Tibial artery (tissue), 4 donors: ENCODE measurements at regions of chr11 and their contacts with region 1.

Region 1: GRCh38 chr11:9787981-9788521 is 124.2 kb downstream of the SWAP70 start:
- DNase-seq: peak in 1 of 2 donors; percentile 36
- H3K4me3 ChIP-seq: no peak overlapping the region
- H3K27ac ChIP-seq: no peak overlapping the region
- H3K4me1 ChIP-seq: no peaks in the 10 kb centered on the region
- H3K27me3 ChIP-seq: no peaks in the 10 kb centered on the region
- CTCF ChIP-seq: no peak

Region 2: DNA sequence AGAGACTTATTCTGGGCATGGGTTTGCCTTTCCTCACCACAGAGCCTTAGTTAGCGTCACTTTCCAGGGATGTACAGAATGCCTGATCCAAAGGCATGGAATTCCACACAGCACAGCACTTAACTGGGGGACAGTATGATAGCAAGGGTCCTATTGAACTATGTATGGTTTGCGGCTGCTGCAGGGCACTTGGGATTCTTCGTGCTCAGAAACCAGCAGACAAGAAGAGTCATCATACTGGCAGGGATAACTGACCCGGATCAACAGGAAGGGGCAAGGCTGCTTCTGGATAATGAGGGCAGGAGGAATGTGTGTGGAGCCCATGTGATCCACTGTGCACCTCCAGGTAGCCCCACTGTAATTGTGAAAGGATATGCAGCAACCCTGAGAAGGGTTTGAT is 18.4 kb before region 1 on chr11:
- intact Hi-C with region 1: loop called (anchors 2 kb)
- DNase-seq: no peak
- H3K4me3 ChIP-seq: no peak overlapping the region
- H3K27ac ChIP-seq: no peak overlapping the region
- H3K4me1 ChIP-seq: peaks cover 0 to 24% (median 13%) of the 10 kb centered on the region in 4 donors
- H3K27me3 ChIP-seq: no peaks in the 10 kb centered on the region
- CTCF ChIP-seq: no peak

Region 3: GRCh38 chr11:9922806-9923205 is 134.8 kb after region 1 on chr11:
- intact Hi-C with region 1: no loop called
- DNase-seq: no peak
- H3K4me3 ChIP-seq: no peak overlapping the region
- H3K27ac ChIP-seq: no peak overlapping the region
- H3K4me1 ChIP-seq: peaks cover 0 to 4% (median 0%) of the 10 kb centered on the region in 4 donors
- H3K27me3 ChIP-seq: no peaks in the 10 kb centered on the region
- CTCF ChIP-seq: no peak